WTC11 (cell line): ENCODE measurements at regions of chrX and their contacts with region 1.

Region 1: GRCh38 chrX:153582896-153583295 is 16.0 kb downstream of the CCNQ start:
- DNase-seq: no peak
- ATAC-seq: no peak
- H3K4me3 Mint-ChIP-seq: no peak overlapping the region
- H3K27ac Mint-ChIP-seq: no peak overlapping the region
- H3K4me1 Mint-ChIP-seq: peaks cover 14% of the 10 kb centered on the region
- H3K27me3 Mint-ChIP-seq: no peaks in the 10 kb centered on the region; the same call in 1 of the 2 replicates
- CTCF ChIP-seq: no peak

Region 2: GRCh38 chrX:153554519-153555167 is 28.3 kb before region 1 on chrX:
- CTCF ChIA-PET with region 1: interaction called, 16 read pairs
- POLR2A ChIA-PET with region 1: no interaction called
- DNase-seq: peak; percentile 74
- ATAC-seq: peak; percentile 84
- H3K4me3 Mint-ChIP-seq: no peak overlapping the region
- H3K27ac Mint-ChIP-seq: no peak overlapping the region
- H3K4me1 Mint-ChIP-seq: no peaks in the 10 kb centered on the region
- H3K27me3 Mint-ChIP-seq: no peaks in the 10 kb centered on the region
- CTCF ChIP-seq: peak; percentile 38

Region 3: GRCh38 chrX:153564051-153564736 is 18.7 kb before region 1 on chrX:
- CTCF ChIA-PET with region 1: interaction called, 48 read pairs
- POLR2A ChIA-PET with region 1: no interaction called
- DNase-seq: no peak
- ATAC-seq: no peak
- H3K4me3 Mint-ChIP-seq: no peak overlapping the region
- H3K27ac Mint-ChIP-seq: no peak overlapping the region
- H3K4me1 Mint-ChIP-seq: peaks cover 8% of the 10 kb centered on the region
- H3K27me3 Mint-ChIP-seq: no peaks in the 10 kb centered on the region; the same call in 1 of the 2 replicates
- CTCF ChIP-seq: no peak